ENCODE measurements at regions of chr2 and their contacts with region 1.

Region 1: GRCh38 chr2:43877782-43878464 is 39.2 kb downstream of the ABCG8 start:
- DNase-seq: peak; percentile 83
- H3K4me3 Mint-ChIP-seq: no peak overlapping the region
- H3K27ac Mint-ChIP-seq: no peak overlapping the region
- H3K4me1 Mint-ChIP-seq: peaks cover 3% of the 10 kb centered on the region
- H3K27me3 Mint-ChIP-seq: peaks cover 7% of the 10 kb centered on the region

Region 2: GRCh38 chr2:43889416-43889815 is 11.5 kb after region 1 on chr2:
- CTCF ChIA-PET with region 1: interaction called, 12 read pairs
- POLR2A ChIA-PET with region 1: no interaction called
- intact Hi-C with region 1: no loop called
- DNase-seq: no peak
- H3K4me3 Mint-ChIP-seq: no peak overlapping the region
- H3K27ac Mint-ChIP-seq: no peak overlapping the region
- H3K4me1 Mint-ChIP-seq: peaks cover 2% of the 10 kb centered on the region
- H3K27me3 Mint-ChIP-seq: no peaks in the 10 kb centered on the region

Region 3: DNA sequence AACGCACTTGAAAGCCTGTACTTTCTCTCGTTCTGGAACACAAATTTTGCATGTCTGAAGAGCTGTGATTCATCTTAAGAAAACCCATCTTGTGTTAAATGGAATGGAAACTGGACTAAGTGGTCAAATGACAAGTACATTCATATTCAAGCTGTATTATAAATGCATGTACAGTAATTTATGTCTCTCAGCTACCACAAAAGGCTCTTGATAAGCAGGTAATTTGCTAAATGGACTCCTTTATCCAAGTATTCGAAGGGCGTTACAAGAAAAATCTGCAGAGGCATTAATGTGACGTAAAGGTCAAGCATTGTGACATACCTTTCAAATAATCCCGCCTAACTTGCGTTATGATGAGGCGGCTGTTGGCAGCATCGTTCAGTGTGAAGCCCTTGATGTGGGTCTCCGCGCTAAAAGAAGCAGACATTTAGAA is 27.5 kb after region 1 on chr2:
- CTCF ChIA-PET with region 1: interaction called, 11 read pairs
- POLR2A ChIA-PET with region 1: no interaction called
- intact Hi-C with region 1: no loop called
- DNase-seq: no peak
- H3K4me3 Mint-ChIP-seq: no peak overlapping the region
- H3K27ac Mint-ChIP-seq: peak overlapping the region; percentile 23
- H3K4me1 Mint-ChIP-seq: peaks cover 25% of the 10 kb centered on the region
- H3K27me3 Mint-ChIP-seq: no peaks in the 10 kb centered on the region

Region 4: DNA sequence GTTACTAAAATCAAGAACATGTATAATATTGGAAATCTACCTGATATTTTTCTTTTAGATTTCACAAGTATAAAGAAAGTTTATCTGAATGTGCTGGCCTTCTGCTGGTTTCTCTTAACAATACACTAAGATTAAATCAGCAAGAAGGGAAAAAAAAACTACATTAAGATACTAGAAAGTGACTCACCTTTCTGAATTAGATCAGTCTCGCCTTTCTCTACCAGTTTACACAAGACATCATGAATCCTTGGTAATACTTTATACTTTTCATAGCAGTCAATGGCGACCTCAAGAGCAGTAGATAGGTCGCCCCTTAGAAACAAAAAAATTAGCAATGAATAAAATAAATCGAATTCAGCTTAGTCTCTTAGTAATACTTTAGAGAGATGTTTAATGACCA is 56.6 kb after region 1 on chr2:
- CTCF ChIA-PET with region 1: interaction called, 8 read pairs
- POLR2A ChIA-PET with region 1: no interaction called
- intact Hi-C with region 1: loop called (anchors 5 kb)
- DNase-seq: no peak
- H3K4me3 Mint-ChIP-seq: no peak overlapping the region
- H3K27ac Mint-ChIP-seq: no peak overlapping the region
- H3K4me1 Mint-ChIP-seq: peaks cover 21% of the 10 kb centered on the region
- H3K27me3 Mint-ChIP-seq: no peaks in the 10 kb centered on the region